Activated naive CD4-positive, alpha-beta T cell treated with anti-CD3 and anti-CD28 coated beads, Interleukin-2, amount 10 ng/mL, durations not matched to agents 7 days and 5 days (primary cell): ENCODE measurements at regions of chr7 and their contacts with region 1.

Region 1: GRCh38 chr7:78039790-78040776 is 241.5 kb downstream of the PHTF2 start:
- DNase-seq: peak; percentile 65
- H3K4me3 Mint-ChIP-seq: no peak overlapping the region
- H3K27ac Mint-ChIP-seq: no peak overlapping the region
- H3K4me1 Mint-ChIP-seq: no peaks in the 10 kb centered on the region
- H3K27me3 Mint-ChIP-seq: peaks cover 29% of the 10 kb centered on the region

Region 2: DNA sequence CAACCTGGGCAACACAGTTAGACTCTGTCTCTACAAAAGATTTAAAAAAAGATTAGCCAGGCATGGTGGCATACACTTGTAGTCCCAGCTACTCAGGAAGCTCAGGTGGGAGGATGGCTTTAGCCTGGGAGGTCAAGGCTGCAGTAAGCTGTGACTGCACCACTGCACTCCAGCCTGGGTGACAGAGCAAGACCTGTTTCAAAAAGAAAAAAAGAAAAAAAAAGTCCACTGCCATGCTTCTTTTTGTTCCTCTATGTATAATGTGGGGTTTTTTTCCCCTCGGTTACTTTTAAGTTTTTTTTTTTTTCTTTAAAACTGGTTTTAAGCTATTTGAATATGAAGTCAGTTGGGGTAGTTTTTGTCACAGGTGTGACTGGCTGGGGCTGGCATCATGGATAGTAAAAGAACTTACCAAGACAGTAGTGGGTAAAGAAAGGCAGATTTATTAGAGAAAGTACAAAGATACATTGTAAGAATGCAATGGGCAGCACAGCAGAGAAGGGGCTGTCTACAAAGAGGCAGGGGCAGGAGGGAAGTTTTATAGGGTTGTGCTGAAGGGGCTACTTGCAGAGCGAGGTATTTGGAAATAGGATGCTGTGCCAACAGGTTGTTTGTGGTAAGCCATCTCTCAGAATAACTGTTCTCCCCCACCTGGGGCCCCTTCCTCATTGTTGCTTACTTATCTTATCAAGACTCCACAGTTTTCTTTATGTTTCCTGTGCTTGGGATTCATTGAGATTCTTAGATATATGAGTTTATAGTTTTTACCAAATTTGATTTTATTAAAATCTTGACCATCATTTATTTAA is 64.2 kb before region 1 on chr7:
- CTCF ChIA-PET with region 1: no interaction called
- DNase-seq: no peak
- H3K4me3 Mint-ChIP-seq: no peak overlapping the region
- H3K27ac Mint-ChIP-seq: no peak overlapping the region
- H3K4me1 Mint-ChIP-seq: no peaks in the 10 kb centered on the region
- H3K27me3 Mint-ChIP-seq: peaks cover 3% of the 10 kb centered on the region

Region 3: GRCh38 chr7:78020136-78020873 is 19.8 kb before region 1 on chr7:
- CTCF ChIA-PET with region 1: interaction called, 40 read pairs
- DNase-seq: peak; percentile 47
- H3K4me3 Mint-ChIP-seq: peak overlapping the region; percentile 71
- H3K27ac Mint-ChIP-seq: no peak overlapping the region
- H3K4me1 Mint-ChIP-seq: peaks cover 14% of the 10 kb centered on the region
- H3K27me3 Mint-ChIP-seq: peaks cover 33% of the 10 kb centered on the region

Region 4: DNA sequence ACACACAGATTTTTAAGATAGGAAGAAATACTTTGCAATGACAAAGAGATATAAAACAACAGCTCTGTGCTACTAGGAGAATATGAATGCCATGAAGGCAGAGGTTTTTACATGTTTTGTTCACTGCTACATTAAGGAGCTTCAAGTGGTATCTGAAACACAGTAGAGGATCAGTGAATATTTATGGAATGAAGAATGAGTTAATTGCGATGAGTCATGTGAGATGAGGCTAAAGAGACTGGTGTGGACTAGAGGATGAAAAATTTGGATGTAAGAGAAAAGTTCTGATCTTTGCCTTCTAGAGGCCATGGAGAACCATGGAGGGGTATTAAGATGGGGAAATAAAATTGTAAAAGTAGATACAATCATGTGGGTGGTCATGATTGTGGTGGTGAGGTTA is 192.7 kb after region 1 on chr7:
- CTCF ChIA-PET with region 1: no interaction called
- DNase-seq: no peak
- H3K4me3 Mint-ChIP-seq: no peak overlapping the region
- H3K27ac Mint-ChIP-seq: no peak overlapping the region
- H3K4me1 Mint-ChIP-seq: no peaks in the 10 kb centered on the region
- H3K27me3 Mint-ChIP-seq: no peaks in the 10 kb centered on the region